B cell (primary cell): ENCODE measurements at regions of chr1 and their contacts with region 1.

Region 1: DNA sequence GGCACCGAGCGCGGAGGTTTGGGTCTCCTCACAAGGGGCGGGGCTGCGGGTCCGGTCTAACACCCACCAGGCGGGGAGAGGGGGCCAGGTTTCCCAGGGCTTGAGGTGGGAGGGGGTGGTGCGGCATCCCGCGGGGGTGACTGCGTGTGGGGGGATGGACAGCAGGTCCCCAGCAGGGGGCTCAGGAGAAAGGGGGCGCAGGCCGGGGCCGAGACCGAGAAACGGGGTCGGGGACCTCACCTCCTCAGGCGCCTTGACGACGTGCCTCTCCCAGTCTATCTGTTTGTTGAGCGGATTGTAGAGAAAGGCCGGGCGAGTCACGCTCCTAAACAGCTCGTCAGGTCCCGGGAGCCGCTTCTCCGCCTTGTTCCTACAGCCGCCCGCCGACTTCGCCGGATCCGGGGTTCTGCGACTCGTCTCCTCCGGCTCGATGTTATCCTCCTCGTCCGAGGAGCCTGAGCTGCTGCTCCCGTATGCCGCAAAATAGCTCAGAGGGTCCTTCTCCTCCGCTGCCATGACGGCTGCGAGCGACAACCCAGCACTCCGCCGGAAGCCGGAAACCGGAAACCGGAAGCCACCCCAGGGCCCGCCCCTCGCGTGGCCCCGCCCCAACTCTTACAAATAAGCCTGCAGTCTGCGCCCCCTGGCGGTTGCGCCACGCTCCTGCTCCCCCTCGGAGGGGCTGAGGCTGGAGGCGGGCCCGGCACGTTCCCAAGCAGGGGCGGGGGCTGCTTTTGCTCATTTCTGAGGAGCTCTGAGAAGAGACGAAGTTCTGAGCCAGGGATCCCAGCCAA is at the start of gene C1orf52:
- DNase-seq: peak; percentile 94
- ATAC-seq: peak; percentile 98
- H3K4me3 ChIP-seq: peak within 1 kb of the TSS; percentile 66 to 94 (median 85)
- H3K4me3 Mint-ChIP-seq: peak within 1 kb of the TSS; percentile 95
- H3K27ac ChIP-seq: peak within 1 kb of the TSS; percentile 62 to 83
- H3K27ac Mint-ChIP-seq: peak within 1 kb of the TSS; percentile 92
- H3K4me1 ChIP-seq: peaks cover 17 to 18% of the 10 kb centered on the region in 2 donors
- H3K4me1 Mint-ChIP-seq: peaks cover 38% of the 10 kb centered on the region
- H3K27me3 ChIP-seq: no peaks in the 10 kb centered on the region
- H3K27me3 Mint-ChIP-seq: no peaks in the 10 kb centered on the region
- CTCF ChIP-seq: peak; percentile 99
- total RNA-seq, gene C1orf52: 39.9 and 45.3 TPM in 2 replicates

Region 2: DNA sequence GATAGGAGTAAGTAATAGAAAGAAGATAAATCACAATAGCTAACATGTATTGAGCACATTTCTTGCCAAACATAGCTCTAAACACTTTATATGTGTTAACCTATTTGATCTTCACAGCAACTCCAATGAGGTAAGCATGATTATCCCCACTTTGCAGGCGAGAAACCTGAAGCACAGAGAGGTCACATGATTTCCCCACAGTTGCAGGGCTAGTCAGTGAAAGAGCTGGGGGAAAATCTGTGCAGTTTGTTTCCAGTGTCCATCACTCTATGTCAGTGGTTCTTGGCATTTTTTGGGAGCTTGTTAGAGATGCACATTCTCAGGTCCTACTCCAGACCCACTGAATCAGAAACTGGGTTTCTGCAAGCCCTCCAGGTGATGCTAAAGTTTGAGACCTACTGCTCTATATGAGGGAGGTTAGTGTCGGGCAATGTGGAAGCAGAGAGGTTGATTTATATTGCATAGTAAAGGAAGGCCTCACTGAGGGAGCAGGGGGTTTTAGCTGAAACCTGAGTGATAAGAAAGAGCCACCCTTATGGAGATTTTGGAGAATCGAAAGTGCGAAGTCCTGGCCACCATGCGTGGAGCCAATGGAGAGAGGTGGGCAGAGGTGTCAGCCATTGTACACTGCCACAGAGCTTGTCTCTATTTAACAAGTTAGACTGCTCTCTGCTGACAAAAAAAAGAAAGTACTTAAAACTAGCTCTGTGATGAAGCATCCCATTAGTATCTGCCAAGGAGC is 231.9 kb before region 1 on chr1:
- CTCF ChIA-PET with region 1: interaction called, 17 read pairs
- POLR2A ChIA-PET with region 1: no interaction called
- intact Hi-C with region 1: loop called (anchors 1 kb)
- DNase-seq: peak; percentile 70
- ATAC-seq: peak; percentile 94
- H3K4me3 ChIP-seq: peak overlapping the region in 3 of 5 experiments; percentile 16 to 40 (median 35)
- H3K4me3 Mint-ChIP-seq: peak overlapping the region; percentile 75
- H3K27ac ChIP-seq: peak overlapping the region in 1 of 2 donors; percentile 25
- H3K27ac Mint-ChIP-seq: peak overlapping the region; percentile 86
- H3K4me1 ChIP-seq: peaks cover 0 to 6% of the 10 kb centered on the region in 2 donors
- H3K4me1 Mint-ChIP-seq: peaks cover 6% of the 10 kb centered on the region
- H3K27me3 ChIP-seq: no peaks in the 10 kb centered on the region
- H3K27me3 Mint-ChIP-seq: no peaks in the 10 kb centered on the region
- CTCF ChIP-seq: peak; percentile 59

Region 3: GRCh38 chr1:85061711-85062424 is 197.4 kb before region 1 on chr1:
- CTCF ChIA-PET with region 1: interaction called, 3 read pairs
- POLR2A ChIA-PET with region 1: no interaction called
- intact Hi-C with region 1: loop called (anchors 2 kb)
- DNase-seq: peak; percentile 94
- ATAC-seq: peak; percentile 99
- H3K4me3 ChIP-seq: peak overlapping the region in 4 of 5 experiments; percentile 45 to 67 (median 55)
- H3K4me3 Mint-ChIP-seq: peak overlapping the region; percentile 92
- H3K27ac ChIP-seq: no peak overlapping the region
- H3K27ac Mint-ChIP-seq: peak overlapping the region; percentile 87
- H3K4me1 ChIP-seq: peaks cover 10 to 13% of the 10 kb centered on the region in 2 donors
- H3K4me1 Mint-ChIP-seq: peaks cover 18% of the 10 kb centered on the region
- H3K27me3 ChIP-seq: peaks cover 0 to 3% (median 0%) of the 10 kb centered on the region in 4 experiments
- H3K27me3 Mint-ChIP-seq: peaks cover 16% of the 10 kb centered on the region
- CTCF ChIP-seq: no peak

Region 4: DNA sequence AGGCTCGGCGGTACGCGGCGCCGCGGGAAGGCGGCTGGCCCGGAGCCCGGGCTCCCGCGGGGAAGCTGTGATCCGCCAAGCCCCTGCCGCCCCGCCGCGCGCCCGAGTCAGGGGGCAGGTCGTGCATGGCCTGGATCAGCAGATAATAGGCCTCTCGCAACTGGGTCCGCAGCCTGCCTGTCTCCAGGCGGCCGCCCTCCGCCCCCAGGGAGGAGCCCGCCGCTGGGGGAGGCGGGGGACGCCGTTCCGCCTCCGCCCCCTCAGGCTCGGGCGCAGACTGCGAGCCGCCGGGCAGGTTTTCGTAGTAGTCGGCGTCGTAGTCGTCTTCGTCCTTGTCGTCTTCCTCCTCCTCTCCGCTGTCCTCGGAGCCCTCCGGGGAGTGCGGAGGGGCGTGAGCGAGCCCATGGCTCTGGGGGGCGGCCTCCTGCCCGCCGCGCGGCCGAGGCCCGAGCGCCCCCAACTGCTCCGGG is 58.4 kb before region 1 on chr1 and contains the start of gene SYDE2:
- CTCF ChIA-PET with region 1: interaction called, 7 read pairs
- POLR2A ChIA-PET with region 1: no interaction called
- intact Hi-C with region 1: loop called (anchors 1 kb)
- DNase-seq: peak; percentile 86
- ATAC-seq: peak; percentile 83
- H3K4me3 ChIP-seq: peak within 1 kb of the TSS; percentile 46 to 73 (median 62)
- H3K4me3 Mint-ChIP-seq: peak within 1 kb of the TSS; percentile 98
- H3K27ac ChIP-seq: peak within 1 kb of the TSS in 1 of 2 donors; percentile 85
- H3K27ac Mint-ChIP-seq: peak within 1 kb of the TSS; percentile 93
- H3K4me1 ChIP-seq: peaks cover 16 to 26% of the 10 kb centered on the region in 2 donors
- H3K4me1 Mint-ChIP-seq: peaks cover 15% of the 10 kb centered on the region
- H3K27me3 ChIP-seq: peaks cover 0 to 35% (median 25%) of the 10 kb centered on the region in 4 experiments
- H3K27me3 Mint-ChIP-seq: peaks cover 42% of the 10 kb centered on the region
- CTCF ChIP-seq: no peak
- total RNA-seq, gene SYDE2: 0.89 and 1.0 TPM in 2 replicates

Region 5: DNA sequence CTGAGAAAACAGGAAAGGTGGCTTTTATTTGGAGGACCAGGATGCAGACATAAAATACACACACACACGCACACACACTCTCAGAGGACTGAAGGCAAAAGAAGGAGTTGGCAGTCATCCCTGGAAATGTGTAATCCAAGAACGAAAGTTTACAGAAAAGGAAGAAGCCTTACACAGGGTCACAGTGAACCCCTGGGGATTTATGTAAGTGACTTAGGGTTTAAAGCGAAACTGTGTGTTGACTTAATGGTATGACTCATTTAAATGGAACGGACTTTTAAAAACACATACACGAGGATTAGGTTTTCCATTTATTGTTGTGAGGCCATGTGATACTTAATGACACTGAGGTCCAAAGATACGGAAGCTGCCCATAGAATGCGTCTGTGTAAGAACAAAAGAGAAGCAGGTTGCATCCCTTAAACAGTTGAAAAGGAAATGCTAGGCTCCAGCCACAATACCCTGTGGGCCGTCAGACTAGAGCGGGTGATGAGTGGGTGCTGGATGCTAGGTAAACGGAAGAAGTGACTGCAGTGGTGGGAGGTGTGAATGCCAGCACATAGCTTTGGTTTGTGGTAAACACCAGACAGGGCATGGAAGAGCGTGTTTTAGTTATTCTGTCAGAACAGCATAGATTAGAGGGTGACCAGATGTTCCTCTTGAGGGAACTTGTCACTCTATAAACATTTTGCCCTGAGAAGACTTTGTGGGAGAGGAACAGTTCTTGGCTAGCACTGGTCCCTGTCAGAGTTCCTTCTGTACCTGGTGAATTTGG is 38.7 kb after region 1 on chr1:
- CTCF ChIA-PET with region 1: interaction called, 3 read pairs
- POLR2A ChIA-PET with region 1: no interaction called
- intact Hi-C with region 1: loop called (anchors 1 kb)
- DNase-seq: peak; percentile 66
- ATAC-seq: peak; percentile 90
- H3K4me3 ChIP-seq: peak overlapping the region in 3 of 5 experiments; percentile 6 to 51 (median 17)
- H3K4me3 Mint-ChIP-seq: peak overlapping the region; percentile 76
- H3K27ac ChIP-seq: peak overlapping the region; percentile 50 to 60
- H3K27ac Mint-ChIP-seq: peak overlapping the region; percentile 78
- H3K4me1 ChIP-seq: peaks cover 19 to 20% of the 10 kb centered on the region in 2 donors
- H3K4me1 Mint-ChIP-seq: peaks cover 26% of the 10 kb centered on the region
- H3K27me3 ChIP-seq: no peaks in the 10 kb centered on the region
- H3K27me3 Mint-ChIP-seq: no peaks in the 10 kb centered on the region
- CTCF ChIP-seq: no peak

Region 6: GRCh38 chr1:85798419-85798818 is 539.1 kb after region 1 on chr1:
- CTCF ChIA-PET with region 1: no interaction called
- POLR2A ChIA-PET with region 1: no interaction called
- intact Hi-C with region 1: no loop called
- DNase-seq: no peak
- ATAC-seq: no peak
- H3K4me3 ChIP-seq: no peak overlapping the region
- H3K4me3 Mint-ChIP-seq: no peak overlapping the region
- H3K27ac ChIP-seq: no peak overlapping the region
- H3K27ac Mint-ChIP-seq: no peak overlapping the region
- H3K4me1 ChIP-seq: no peaks in the 10 kb centered on the region
- H3K4me1 Mint-ChIP-seq: no peaks in the 10 kb centered on the region
- H3K27me3 ChIP-seq: no peaks in the 10 kb centered on the region
- H3K27me3 Mint-ChIP-seq: no peaks in the 10 kb centered on the region
- CTCF ChIP-seq: no peak